Activated CD8-positive, alpha-beta T cell treated with anti-CD3 and anti-CD28 coated beads for 36 hours (primary cell): ENCODE measurements at regions of chr7 and their contacts with region 1.

Region 1: GRCh38 chr7:141737834-141738591 is at the start of gene SSBP1:
- DNase-seq: peak; percentile 94
- ATAC-seq: peak; percentile 87
- H3K4me3 Mint-ChIP-seq: peak within 1 kb of the TSS; percentile 99
- H3K27ac Mint-ChIP-seq: peak within 1 kb of the TSS; percentile 98
- H3K4me1 Mint-ChIP-seq: peaks cover 35% of the 10 kb centered on the region
- H3K27me3 Mint-ChIP-seq: no peaks in the 10 kb centered on the region
- CTCF ChIP-seq: peak; percentile 87
- total RNA-seq, gene SSBP1: 247 to 249 TPM

Region 2: DNA sequence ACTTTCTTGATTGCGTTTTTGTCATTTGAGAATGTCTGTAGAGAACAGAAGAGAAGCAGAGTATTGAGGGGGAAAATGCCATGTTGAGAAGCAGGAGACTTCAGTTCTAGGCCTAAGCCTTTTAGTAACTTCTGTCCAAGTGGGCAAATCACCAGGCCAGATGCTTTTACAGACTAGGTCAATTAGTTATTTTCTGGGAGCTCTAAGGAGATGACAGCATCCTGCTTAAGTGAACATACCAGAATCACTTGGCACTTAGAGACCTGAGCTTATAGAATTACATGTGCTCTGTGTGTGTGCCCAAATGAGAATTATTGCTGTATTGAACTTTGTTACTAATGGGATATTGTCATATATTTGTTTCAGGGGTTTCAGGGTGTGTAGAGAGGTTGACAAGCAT is 162.8 kb before region 1 on chr7:
- CTCF ChIA-PET with region 1: no interaction called
- POLR2A ChIA-PET with region 1: no interaction called
- intact Hi-C with region 1: no loop called
- DNase-seq: no peak
- ATAC-seq: no peak
- H3K4me3 Mint-ChIP-seq: no peak overlapping the region
- H3K27ac Mint-ChIP-seq: no peak overlapping the region
- H3K4me1 Mint-ChIP-seq: peaks cover 27% of the 10 kb centered on the region
- H3K27me3 Mint-ChIP-seq: no peaks in the 10 kb centered on the region
- CTCF ChIP-seq: no peak

Region 3: GRCh38 chr7:141654551-141654950 is 83.5 kb before region 1 on chr7:
- CTCF ChIA-PET with region 1: interaction called, 51 read pairs
- POLR2A ChIA-PET with region 1: no interaction called
- intact Hi-C with region 1: loop called (anchors 1 kb)
- DNase-seq: peak; percentile 80
- ATAC-seq: peak; percentile 93
- H3K4me3 Mint-ChIP-seq: no peak overlapping the region
- H3K27ac Mint-ChIP-seq: peak overlapping the region; percentile 75
- H3K4me1 Mint-ChIP-seq: peaks cover 6% of the 10 kb centered on the region
- H3K27me3 Mint-ChIP-seq: no peaks in the 10 kb centered on the region
- CTCF ChIP-seq: peak; percentile 64

Region 4: GRCh38 chr7:141660259-141660658 is 77.8 kb before region 1 on chr7:
- CTCF ChIA-PET with region 1: interaction called, 51 read pairs
- POLR2A ChIA-PET with region 1: interaction called, 5 read pairs
- intact Hi-C with region 1: no loop called
- DNase-seq: no peak
- ATAC-seq: no peak
- H3K4me3 Mint-ChIP-seq: no peak overlapping the region
- H3K27ac Mint-ChIP-seq: peak overlapping the region; percentile 71
- H3K4me1 Mint-ChIP-seq: peaks cover 10% of the 10 kb centered on the region
- H3K27me3 Mint-ChIP-seq: no peaks in the 10 kb centered on the region
- CTCF ChIP-seq: no peak

Region 5: DNA sequence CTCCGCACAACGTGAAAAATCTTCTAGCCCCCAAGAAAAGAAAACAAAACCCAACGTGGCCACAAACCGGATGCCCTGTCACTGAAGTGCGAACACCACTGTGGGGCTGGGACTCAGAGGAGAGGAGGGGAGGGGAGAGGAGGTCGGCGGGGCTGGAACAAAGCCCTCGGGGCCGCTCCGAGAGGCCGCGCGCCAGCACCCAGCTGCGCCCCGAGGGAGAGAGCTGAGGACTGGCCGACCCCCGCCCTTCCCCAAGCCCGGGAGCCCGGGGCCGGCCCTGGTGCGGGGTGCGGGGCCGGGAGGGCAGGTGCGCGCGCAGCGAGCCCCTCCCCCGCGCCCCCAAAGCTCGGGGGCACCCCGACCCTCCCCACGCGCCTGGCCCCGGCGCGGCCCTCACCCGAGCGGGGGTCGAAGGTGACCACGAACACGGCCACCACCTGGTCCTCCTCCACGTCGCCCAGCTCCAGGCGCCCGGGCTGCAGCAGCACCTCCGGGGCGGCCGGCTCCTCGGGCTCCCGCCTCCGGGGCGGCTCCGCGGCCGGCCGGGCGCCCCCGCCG is 36.4 kb before region 1 on chr7:
- CTCF ChIA-PET with region 1: interaction called, 28 read pairs
- POLR2A ChIA-PET with region 1: interaction called, 13 read pairs
- intact Hi-C with region 1: no loop called
- DNase-seq: peak; percentile 86
- ATAC-seq: peak; percentile 88
- H3K4me3 Mint-ChIP-seq: peak overlapping the region; percentile 71
- H3K27ac Mint-ChIP-seq: peak overlapping the region; percentile 68
- H3K4me1 Mint-ChIP-seq: peaks cover 47% of the 10 kb centered on the region
- H3K27me3 Mint-ChIP-seq: peaks cover 2% of the 10 kb centered on the region
- CTCF ChIP-seq: no peak

Region 6: DNA sequence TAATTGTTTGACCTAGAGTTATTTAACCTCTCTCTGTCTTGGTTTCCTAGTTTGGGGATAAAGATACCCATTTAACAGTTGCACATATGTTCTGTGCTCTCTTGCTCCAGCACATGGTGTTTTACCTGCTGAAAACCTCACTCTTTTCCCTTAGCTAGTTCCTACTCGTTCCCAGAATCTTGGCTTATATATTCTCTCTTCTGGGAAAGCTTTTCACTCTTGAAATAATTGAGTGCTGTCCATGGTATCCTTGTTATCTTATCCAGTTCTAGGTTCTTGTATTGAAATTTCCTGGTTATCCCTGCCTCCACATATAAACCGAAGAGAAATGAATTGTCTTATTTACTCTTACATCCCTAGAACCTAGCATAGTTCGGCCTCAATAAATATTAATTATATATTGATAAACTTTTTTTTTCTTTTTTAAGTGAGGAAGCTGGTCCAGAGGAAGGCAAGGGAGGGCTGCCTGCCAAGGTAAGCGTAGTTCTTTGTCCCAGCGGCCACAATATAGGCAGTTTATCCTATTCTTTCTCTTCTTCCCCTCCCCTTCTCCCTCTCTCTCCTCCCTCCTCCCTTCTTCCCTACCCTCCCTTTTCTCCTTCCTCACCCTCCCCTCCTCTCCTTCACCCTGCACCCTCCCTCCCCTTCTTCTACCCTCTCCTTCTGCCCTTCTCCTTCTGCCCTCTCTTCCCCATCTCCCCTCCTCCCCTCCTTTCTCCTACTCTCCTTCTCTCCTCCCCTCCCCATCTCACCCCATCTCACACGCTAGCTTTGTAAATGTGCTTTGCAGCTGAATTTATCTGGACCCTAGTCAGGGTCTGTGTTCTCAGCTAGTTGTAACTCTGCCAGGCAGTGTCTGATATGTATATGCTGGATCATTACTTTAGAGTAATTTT is 22.0 kb before region 1 on chr7:
- CTCF ChIA-PET with region 1: interaction called, 10 read pairs
- POLR2A ChIA-PET with region 1: interaction called, 8 read pairs
- intact Hi-C with region 1: no loop called
- DNase-seq: no peak
- ATAC-seq: no peak
- H3K4me3 Mint-ChIP-seq: no peak overlapping the region
- H3K27ac Mint-ChIP-seq: no peak overlapping the region
- H3K4me1 Mint-ChIP-seq: peaks cover 3% of the 10 kb centered on the region
- H3K27me3 Mint-ChIP-seq: no peaks in the 10 kb centered on the region
- CTCF ChIP-seq: no peak

Region 7: GRCh38 chr7:141722529-141722928 is 15.5 kb before region 1 on chr7:
- CTCF ChIA-PET with region 1: interaction called, 35 read pairs
- POLR2A ChIA-PET with region 1: interaction called, 8 read pairs
- intact Hi-C with region 1: no loop called
- DNase-seq: no peak
- ATAC-seq: no peak
- H3K4me3 Mint-ChIP-seq: no peak overlapping the region
- H3K27ac Mint-ChIP-seq: no peak overlapping the region
- H3K4me1 Mint-ChIP-seq: no peaks in the 10 kb centered on the region
- H3K27me3 Mint-ChIP-seq: no peaks in the 10 kb centered on the region
- CTCF ChIP-seq: no peak

Region 8: DNA sequence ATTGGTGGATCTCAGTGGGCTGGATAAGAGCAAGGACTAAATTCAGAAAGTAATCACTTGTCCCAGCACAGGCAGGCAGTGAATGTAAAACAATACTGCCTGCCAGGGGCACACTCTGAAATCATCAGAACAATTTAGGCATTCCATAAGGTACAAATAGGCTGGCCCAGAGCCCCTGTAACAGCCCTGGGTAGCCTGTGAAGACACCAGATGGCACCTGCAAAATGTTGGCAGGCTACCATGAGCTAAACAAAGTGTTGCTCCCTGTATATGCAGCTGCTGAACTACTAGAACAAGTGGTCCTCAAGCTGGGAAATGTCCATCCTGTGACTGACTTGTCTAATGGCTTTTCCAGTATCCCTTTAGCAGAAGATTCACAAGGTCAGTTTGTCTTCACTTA is 106.2 kb after region 1 on chr7:
- CTCF ChIA-PET with region 1: no interaction called
- POLR2A ChIA-PET with region 1: no interaction called
- intact Hi-C with region 1: no loop called
- DNase-seq: no peak
- ATAC-seq: no peak
- H3K4me3 Mint-ChIP-seq: no peak overlapping the region
- H3K27ac Mint-ChIP-seq: no peak overlapping the region
- H3K4me1 Mint-ChIP-seq: no peaks in the 10 kb centered on the region
- H3K27me3 Mint-ChIP-seq: no peaks in the 10 kb centered on the region
- CTCF ChIP-seq: no peak